OCI-LY7 (cell line): ENCODE measurements at regions of chr10 and their contacts with region 1.

Region 1: GRCh38 chr10:72331601-72332422 is 22.9 kb downstream of the DNAJB12 start:
- DNase-seq: peak; percentile 93
- H3K4me3 ChIP-seq: peak overlapping the region; percentile 50
- H3K27ac ChIP-seq: peak overlapping the region; percentile 80
- H3K4me1 ChIP-seq: peaks cover 83% of the 10 kb centered on the region
- CTCF ChIP-seq: peak; percentile 45

Region 2: DNA sequence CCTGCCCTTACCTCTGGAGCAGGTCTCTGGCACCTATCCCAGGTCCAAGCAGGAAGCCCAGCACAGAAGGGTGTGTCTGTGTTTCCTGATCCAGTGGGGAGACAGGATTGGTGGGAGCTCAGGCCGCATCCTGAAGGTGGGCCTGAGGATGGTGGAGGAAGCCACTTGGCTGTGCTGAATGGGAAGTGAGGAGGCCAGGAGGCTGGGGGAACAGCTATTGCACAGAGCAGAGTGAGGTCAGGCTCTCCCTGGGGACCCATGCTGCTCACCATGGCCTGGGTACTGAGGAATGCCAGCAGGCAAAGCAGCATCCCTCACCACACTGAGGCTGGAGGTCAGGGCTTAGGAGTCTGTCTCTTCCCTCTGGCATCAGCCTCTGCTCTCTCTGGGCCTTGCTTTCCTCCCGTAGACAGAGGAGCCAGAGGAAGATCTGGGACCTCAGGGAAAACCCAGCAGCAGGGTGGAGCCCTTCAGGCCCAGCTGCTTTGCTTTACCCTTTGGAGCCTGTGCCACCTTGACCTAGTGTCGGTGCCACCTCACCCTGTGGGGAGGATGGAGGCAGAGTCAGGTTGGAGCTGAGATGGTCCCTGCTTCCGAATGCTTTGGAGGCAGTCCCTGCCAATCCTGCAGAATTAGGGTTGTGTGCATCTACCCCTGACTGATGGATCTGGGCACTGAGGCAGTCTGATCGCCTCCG is 896.1 kb before region 1 on chr10:
- CTCF ChIA-PET with region 1: no interaction called
- POLR2A ChIA-PET with region 1: no interaction called
- intact Hi-C with region 1: no loop called
- DNase-seq: no peak
- H3K4me3 ChIP-seq: no peak overlapping the region
- H3K27ac ChIP-seq: no peak overlapping the region
- H3K4me1 ChIP-seq: no peaks in the 10 kb centered on the region
- CTCF ChIP-seq: no peak

Region 3: DNA sequence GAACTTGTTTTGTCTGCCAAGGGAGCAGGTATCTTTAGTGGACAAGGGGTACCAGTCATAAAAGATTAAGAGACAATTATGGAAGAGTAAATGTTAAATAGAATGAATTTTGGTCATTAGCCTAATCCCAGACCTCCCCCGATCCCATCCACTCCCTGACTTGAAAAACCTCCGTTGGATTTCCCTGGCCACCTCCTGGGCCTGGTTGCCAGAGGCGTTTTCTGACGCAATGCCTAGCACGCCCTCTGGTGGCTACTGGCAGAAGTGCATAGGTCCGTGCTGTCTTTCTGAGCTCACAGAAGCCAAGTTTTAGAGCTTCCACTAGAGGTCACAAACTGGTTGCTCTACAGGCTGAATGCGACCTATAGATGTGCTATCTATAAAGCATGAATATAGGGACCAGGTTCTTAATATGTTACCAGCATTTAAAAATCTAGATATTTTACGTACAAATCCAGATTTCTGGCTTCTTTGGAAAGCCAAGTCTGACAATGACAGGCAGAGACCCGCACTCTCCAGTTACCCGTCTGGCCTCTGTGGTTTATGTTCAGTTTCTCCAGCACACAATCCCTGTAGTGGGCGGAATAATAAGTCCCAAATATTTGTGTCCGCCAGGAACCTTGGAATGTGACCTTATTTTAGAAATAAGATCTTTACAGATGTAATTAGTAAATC is 283.2 kb before region 1 on chr10:
- CTCF ChIA-PET with region 1: interaction called, 4 read pairs
- POLR2A ChIA-PET with region 1: interaction called, 3 read pairs
- intact Hi-C with region 1: loop called (anchors 1 kb)
- DNase-seq: peak; percentile 92
- H3K4me3 ChIP-seq: no peak overlapping the region
- H3K27ac ChIP-seq: no peak overlapping the region
- H3K4me1 ChIP-seq: no peaks in the 10 kb centered on the region
- CTCF ChIP-seq: peak; percentile 100

Region 4: GRCh38 chr10:72215652-72216549 is 115.9 kb before region 1 on chr10 and contains the starts of genes ANAPC16 and ASCC1:
- CTCF ChIA-PET with region 1: no interaction called
- POLR2A ChIA-PET with region 1: interaction called, 8 read pairs
- intact Hi-C with region 1: loop called (anchors 2 kb)
- DNase-seq: peak; percentile 94
- H3K4me3 ChIP-seq: peak within 1 kb of the TSS; percentile 82
- H3K27ac ChIP-seq: peak within 1 kb of the TSS; percentile 86
- H3K4me1 ChIP-seq: peaks cover 39% of the 10 kb centered on the region
- CTCF ChIP-seq: no peak
- total RNA-seq, gene ANAPC16: 48.4 and 68.0 TPM in 2 replicates
- total RNA-seq, gene ASCC1: 19.3 and 27.1 TPM in 2 replicates

Region 5: DNA sequence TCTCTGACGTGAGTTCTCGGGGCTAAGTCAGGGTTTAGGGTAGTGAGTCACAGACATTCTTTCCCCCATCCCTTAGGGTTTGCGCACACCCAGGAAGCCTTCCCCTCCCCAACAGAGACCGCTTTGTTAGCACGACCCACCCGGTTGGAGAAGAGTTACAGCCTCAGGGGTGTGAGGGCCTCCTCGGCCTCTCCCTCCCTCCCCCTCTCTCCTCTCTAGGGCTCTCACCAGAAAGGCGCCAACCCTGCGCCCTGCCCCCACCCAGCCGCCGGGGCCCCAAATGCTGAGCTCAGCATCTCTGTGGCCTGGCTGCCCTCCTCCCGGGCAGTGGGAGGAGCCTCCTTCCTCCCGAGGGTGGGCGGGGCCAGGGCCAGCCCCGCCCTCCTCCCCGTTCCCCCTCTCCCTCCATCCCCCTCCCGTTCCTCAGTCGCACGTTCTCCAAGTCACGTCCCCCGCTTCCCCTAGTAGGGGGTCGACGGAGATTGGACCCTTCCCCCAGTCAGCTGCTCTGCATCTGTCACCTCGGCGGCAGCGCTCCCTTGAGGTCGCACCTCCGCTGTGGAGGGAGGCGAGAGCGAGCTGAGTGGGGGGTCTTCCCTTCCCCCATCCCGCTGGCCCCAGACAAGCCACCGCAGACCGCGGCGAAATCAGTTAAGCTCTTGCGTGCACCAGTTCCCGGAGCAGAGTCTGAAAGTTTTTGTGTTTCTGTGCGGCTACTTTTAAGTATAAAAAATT is 71.1 kb before region 1 on chr10:
- CTCF ChIA-PET with region 1: no interaction called
- POLR2A ChIA-PET with region 1: interaction called, 17 read pairs
- intact Hi-C with region 1: no loop called
- DNase-seq: peak; percentile 91
- H3K4me3 ChIP-seq: peak overlapping the region; percentile 66
- H3K27ac ChIP-seq: peak overlapping the region; percentile 74
- H3K4me1 ChIP-seq: peaks cover 80% of the 10 kb centered on the region
- CTCF ChIP-seq: peak; percentile 43

Region 6: GRCh38 chr10:72297968-72298773 is 33.6 kb before region 1 on chr10:
- CTCF ChIA-PET with region 1: interaction called, 7 read pairs
- POLR2A ChIA-PET with region 1: interaction called, 12 read pairs
- intact Hi-C with region 1: loop called (anchors 1 kb)
- DNase-seq: peak; percentile 97
- H3K4me3 ChIP-seq: peak overlapping the region; percentile 71
- H3K27ac ChIP-seq: peak overlapping the region; percentile 83
- H3K4me1 ChIP-seq: peaks cover 36% of the 10 kb centered on the region
- CTCF ChIP-seq: no peak